ENCODE measurements at regions of chr11 and their contacts with region 1.

Region 1: GRCh38 chr11:31487848-31488247 is 21.6 kb downstream of the IMMP1L start:
- DNase-seq: peak; percentile 73
- ATAC-seq: peak; percentile 82
- H3K4me3 ChIP-seq: no peak overlapping the region
- H3K27ac ChIP-seq: no peak overlapping the region
- H3K4me1 ChIP-seq: no peaks in the 10 kb centered on the region
- H3K27me3 ChIP-seq: no peaks in the 10 kb centered on the region
- CTCF ChIP-seq: peak; percentile 60
- POLR2A ChIP-seq: no peak
- RAD21 ChIP-seq: peak; percentile 63

Region 2: DNA sequence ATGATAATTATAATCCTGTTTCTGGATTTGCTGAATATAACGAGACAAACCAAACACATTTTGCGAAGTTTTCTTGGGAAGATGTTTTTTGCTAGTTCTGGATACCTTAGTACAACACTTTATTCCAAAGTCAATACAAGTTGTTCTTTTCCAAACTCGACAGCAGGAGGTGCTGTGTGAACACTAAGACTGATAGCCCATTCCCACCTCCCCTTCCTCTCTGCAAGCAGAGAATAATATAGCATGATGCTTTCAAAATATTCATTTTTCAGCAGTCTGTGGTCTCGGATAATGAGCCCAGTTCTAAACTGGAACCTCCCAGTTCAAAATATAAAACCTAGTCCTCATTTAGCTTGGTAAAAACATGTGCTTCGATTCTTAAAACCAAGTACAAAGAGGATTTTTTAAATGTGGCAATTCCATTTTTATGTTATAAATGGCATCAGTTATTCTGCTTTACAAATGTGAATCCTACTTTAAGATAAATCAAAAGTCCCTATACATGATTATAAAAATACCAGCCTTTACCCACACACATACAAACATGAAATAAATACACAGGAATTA is 247.4 kb before region 1 on chr11:
- CTCF ChIA-PET with region 1: no interaction called
- POLR2A ChIA-PET with region 1: no interaction called
- dilution Hi-C with region 1: no loop called
- in situ Hi-C with region 1: no loop called
- intact Hi-C with region 1: loop called (anchors 10 kb)
- DNase-seq: peak; percentile 33
- ATAC-seq: no peak; the same call in 1 of the 2 replicates
- H3K4me3 ChIP-seq: no peak overlapping the region
- H3K27ac ChIP-seq: no peak overlapping the region
- H3K4me1 ChIP-seq: no peaks in the 10 kb centered on the region
- H3K27me3 ChIP-seq: no peaks in the 10 kb centered on the region
- CTCF ChIP-seq: peak; percentile 45
- POLR2A ChIP-seq: no peak
- RAD21 ChIP-seq: peak; percentile 43; the same call in 1 of the 2 replicates

Region 3: DNA sequence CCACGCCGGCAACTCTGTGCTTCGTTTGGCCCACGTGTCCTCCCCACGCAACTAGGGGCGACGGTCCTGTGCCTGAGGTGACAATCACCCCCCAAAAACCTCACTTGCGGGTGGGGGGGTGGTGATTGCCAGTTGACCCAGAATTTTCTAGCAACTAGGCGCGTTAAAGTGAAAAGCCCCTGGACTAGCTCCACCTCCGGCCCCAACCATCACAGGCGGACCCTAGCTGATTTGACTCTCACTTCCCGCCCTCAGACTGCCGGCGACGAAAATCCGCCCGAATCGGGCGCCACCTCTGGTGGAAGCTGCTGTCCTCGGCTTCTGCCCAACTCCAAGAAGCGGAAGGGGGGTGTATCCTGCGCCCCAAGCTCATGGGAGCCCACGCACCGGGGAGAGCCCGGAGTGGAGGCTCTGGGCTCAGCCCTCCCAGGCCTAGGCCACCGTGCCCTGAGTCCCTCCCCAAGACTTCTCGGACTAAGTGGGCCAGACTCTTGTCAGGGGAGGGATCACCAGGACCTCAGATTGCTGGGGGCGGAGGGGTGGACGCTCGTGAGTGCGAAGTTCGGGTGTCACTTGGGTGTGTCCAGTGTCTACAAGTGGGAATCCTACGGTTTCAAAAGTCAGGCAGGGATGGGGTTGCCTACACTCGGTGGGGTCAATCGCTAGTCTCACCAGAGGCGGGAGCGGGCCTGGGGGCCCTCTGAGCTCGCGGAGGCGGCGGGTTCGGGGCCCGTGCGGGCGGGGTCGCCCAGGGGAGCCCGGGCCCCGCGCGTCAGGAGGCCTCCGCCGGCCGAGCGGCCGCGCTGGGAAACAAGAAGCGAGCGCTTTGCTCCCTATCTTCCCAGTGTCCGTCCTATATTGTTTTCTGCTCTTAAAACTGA is 310.9 kb after region 1 on chr11:
- CTCF ChIA-PET with region 1: no interaction called
- POLR2A ChIA-PET with region 1: no interaction called
- dilution Hi-C with region 1: no loop called
- in situ Hi-C with region 1: no loop called
- intact Hi-C with region 1: loop called (anchors 10 kb)
- DNase-seq: no peak
- ATAC-seq: peak; percentile 19; the same call in 1 of the 2 replicates
- H3K4me3 ChIP-seq: no peak overlapping the region
- H3K27ac ChIP-seq: no peak overlapping the region
- H3K4me1 ChIP-seq: peaks cover 3% of the 10 kb centered on the region; the same call in 1 of the 2 replicates
- H3K27me3 ChIP-seq: peaks cover 85% of the 10 kb centered on the region
- CTCF ChIP-seq: peak; percentile 24; the same call in 1 of the 2 replicates
- POLR2A ChIP-seq: no peak
- RAD21 ChIP-seq: no peak

Region 4: DNA sequence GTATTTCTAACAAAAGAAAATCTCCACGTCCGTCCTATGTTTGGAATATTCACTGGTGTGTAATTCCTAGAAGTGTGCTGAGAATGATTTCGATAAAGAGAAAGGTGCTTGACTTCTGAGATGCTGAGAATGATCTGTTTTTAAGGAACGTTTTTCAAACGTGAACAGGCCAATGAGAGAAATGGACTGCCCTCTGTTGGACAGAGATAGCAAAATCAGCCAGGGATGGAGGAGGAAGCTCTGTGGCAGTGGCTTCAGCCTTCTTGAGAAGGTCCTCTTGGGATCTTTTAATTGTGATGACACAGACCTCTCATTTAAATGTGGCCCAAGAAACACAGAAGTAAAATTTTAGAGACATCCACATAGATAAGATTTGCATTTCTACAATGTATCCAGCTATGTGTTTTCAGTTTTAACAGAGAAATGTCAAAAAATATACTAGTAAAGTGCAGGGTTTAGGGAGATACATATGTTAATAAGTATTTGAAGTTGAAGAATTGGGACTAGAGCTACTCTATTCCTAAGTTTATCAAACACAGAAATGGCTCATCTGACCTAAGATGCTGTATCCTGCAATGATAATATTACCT is 519.0 kb after region 1 on chr11:
- CTCF ChIA-PET with region 1: interaction called, 3 read pairs
- POLR2A ChIA-PET with region 1: no interaction called
- dilution Hi-C with region 1: no loop called
- in situ Hi-C with region 1: no loop called
- intact Hi-C with region 1: loop called (anchors 1 kb)
- DNase-seq: peak; percentile 51
- ATAC-seq: peak; percentile 85
- H3K4me3 ChIP-seq: no peak overlapping the region
- H3K27ac ChIP-seq: no peak overlapping the region
- H3K4me1 ChIP-seq: 0 out of 2 replicates have a peak, but pooled peaks cover under 1% of the 10 kb centered on the region
- H3K27me3 ChIP-seq: peaks cover 43% of the 10 kb centered on the region
- CTCF ChIP-seq: peak; percentile 63
- POLR2A ChIP-seq: no peak
- RAD21 ChIP-seq: peak; percentile 65